Sciatic nerve (tissue), 2 donors: ENCODE measurements at regions of chr10 and their contacts with region 1.

Region 1: DNA sequence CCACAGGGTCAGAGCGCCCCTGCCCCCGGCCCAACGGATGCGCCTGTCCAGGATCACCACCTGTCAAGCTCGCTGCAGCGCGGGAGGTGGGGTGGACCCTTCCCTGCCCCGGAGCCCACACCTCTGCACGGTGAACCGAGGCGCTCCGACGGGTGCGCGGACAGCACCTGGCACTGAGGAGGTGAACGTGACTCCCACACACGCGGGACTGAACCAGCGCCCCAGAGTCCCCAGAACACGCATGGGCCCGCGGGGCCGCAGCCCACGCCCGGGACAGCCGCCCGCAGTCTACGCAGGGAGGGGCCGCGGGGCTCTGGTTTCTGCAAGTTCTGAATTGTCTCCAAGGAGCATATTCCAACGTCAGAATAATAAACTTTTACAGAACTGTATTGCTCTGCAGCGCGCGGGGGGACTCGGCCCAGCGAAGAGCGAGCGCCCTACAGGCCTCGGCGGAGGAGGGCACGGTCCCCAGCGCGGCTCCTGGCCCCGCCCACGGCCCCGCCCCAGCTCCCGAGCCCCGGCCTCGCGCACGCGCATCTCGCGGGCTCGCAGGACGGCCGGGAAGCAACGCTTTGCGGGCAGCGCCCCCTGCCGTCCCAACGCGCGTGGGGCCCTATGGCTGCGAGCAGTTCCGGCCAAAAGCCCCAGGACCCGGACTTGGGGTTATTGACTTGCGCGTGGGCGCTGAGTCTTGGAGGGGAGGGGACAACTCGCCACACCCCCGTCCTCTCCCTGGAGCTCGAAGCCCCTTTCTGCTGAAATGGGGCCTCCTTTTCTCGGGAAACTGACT is 29.7 kb downstream of the OAT start:
- DNase-seq: peak; percentile 94
- ATAC-seq: peak; percentile 98

Region 2: DNA sequence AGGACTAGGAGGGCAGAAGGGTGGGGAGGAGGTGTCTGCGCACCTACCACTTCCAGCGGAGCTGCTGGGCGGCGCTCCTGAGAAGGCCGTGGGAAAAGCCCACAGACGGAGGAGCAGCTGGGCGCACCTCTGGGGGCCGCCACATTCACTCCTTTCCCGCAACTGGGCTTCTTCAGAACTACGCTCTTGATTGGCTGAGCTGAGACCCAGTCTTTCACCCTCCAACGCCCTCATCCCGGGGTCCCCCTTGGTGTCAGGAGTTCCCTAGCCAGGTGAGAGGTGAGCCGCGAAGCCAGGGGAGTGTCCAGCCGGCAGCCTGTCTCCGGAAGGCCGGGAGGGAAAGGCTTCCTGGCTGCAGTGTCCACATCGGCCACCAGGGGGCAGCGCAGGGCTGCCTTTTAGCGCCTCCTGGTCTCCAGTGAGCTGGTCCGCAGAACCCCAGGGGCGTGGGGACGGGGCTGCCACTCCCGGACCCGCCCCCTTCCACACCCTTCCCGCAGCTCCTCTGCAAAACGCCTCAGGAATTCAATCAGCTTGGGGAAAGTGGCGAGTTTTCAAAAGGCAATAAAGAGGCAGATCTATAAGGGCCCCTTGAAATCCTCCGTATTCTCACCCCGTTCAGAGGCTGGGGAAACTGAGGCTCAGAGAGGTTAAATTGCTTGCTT is 394.5 kb before region 1 on chr10:
- intact Hi-C with region 1: loop called (anchors 2 kb)
- DNase-seq: peak; percentile 94
- ATAC-seq: peak; percentile 86

Region 3: DNA sequence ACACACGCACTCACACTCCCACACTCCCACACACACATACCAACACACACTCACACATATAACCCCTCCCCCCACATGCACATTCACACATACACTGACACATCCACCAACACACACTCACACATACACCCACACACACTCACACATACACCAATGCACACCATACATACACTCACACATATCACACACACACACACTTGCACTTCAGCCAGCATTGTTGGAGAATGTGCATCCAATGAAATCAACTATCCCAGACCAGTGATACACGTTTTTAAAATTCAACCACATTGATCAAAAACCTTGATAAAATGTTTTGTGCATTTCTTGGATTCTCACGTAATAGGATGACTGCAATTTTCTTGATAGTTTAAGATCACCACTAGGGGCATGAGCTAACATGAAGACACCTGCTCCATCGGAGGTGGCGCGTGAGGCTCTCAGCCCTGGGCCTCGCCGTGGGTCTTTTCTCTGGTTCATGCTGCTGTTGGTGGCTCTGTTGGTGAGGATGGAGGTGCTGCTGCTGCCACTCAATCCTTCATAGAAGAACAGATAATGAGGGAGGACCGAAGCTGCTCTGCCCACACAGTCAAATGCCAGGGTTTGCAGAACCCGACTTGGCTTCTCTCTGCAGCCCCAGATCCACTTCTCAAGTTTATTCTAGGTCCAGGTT is 263.4 kb before region 1 on chr10:
- intact Hi-C with region 1: loop called (anchors 10 kb)
- DNase-seq: no peak
- ATAC-seq: no peak

Region 4: DNA sequence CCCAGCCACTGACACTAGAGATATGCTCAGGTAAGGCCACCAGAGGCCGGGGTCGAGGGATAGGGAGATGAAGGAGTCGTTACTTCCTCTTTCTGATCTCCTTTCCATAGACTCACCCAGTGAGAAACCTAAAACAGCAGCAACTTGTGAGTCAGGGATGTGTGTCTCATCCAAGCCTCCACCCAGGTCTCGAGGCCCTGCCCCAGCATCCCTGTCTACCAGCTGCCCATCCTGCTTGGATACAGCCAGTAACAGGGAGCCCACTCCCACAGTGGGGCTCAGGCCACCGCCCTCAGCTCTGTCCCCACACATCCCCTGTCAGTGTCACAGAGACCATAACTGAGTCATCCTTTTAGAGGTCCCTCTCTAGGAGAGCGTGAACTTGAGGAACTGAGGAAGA is 246.1 kb before region 1 on chr10:
- intact Hi-C with region 1: loop called (anchors 5 kb)
- DNase-seq: no peak
- ATAC-seq: no peak

Region 5: GRCh38 chr10:124508070-124508667 is 119.2 kb after region 1 on chr10:
- intact Hi-C with region 1: no loop called
- DNase-seq: no peak
- ATAC-seq: no peak